ENCODE measurements at regions of chr11 and their contacts with region 1.

Region 1: GRCh38 chr11:50030193-50030592 is 2.5 kb upstream of the OR4C45 start:
- DNase-seq: no peak
- H3K4me3 Mint-ChIP-seq: no peak overlapping the region
- H3K27ac Mint-ChIP-seq: no peak overlapping the region
- H3K4me1 Mint-ChIP-seq: no peaks in the 10 kb centered on the region
- H3K27me3 Mint-ChIP-seq: no peaks in the 10 kb centered on the region

Region 2: GRCh38 chr11:48354677-48355076 is 1675.5 kb before region 1 on chr11:
- intact Hi-C with region 1: loop called (anchors 10 kb)
- DNase-seq: no peak
- H3K4me3 Mint-ChIP-seq: no peak overlapping the region
- H3K27ac Mint-ChIP-seq: no peak overlapping the region
- H3K4me1 Mint-ChIP-seq: no peaks in the 10 kb centered on the region
- H3K27me3 Mint-ChIP-seq: no peaks in the 10 kb centered on the region

Measured in activated T-helper 2 cell treated with anti-CD3 and anti-CD28 coated beads, Interferon-gamma antibody, Interleukin-2, Interleukin-4, amounts not matched to agents 10 μg/mL and 5 μg/mL and 100 μg/mL, durations not matched to agents 14 hours and 24 hours and 36 hours (primary cell).